ENCODE measurements at regions of chr16 and their contacts with region 1.

Region 1: GRCh38 chr16:81314603-81315270 is at the start of gene GAN:
- DNase-seq: peak; percentile 98 to 99 (median 99)
- ATAC-seq: peak; percentile 97
- H3K4me3 ChIP-seq: peak within 1 kb of the TSS; percentile 80
- H3K27ac ChIP-seq: peak within 1 kb of the TSS; percentile 87
- H3K4me1 ChIP-seq: peaks cover 17 to 28% of the 10 kb centered on the region in 2 experiments
- H3K27me3 ChIP-seq: no peaks in the 10 kb centered on the region
- CTCF ChIP-seq: no peak
- EP300 ChIP-seq: peak; percentile 51
- POLR2A ChIP-seq: peak; percentile 91
- RAD21 ChIP-seq: no peak
- polyA plus RNA-seq, gene GAN: 0.83 to 2.1 TPM

Region 2: DNA sequence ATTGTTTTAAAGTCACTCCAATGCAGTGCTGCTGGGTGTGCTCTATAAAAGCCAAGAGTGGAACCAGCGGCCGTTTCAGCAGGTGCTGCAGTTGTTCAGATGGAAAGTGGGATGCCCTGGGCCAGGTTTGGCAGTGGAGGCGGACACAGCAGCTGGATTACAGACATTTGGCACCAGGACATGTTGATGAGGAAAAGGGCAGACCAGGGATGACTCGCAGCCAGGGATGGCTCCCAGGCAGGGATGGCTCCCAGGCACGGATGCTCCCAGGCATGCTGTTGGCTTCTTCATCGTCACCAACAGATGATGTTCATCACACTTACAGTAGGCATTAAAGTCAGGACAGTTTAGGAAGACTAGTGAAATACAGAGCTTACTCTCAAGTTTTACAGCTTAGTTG is 10.1 kb after region 1 on chr16:
- CTCF ChIA-PET with region 1: no interaction called
- POLR2A ChIA-PET with region 1: interaction called, 11 read pairs
- in situ Hi-C with region 1: no loop called
- intact Hi-C with region 1: no loop called
- DNase-seq: no peak
- ATAC-seq: no peak
- H3K4me3 ChIP-seq: no peak overlapping the region
- H3K27ac ChIP-seq: no peak overlapping the region
- H3K4me1 ChIP-seq: peaks cover 0 to 4% of the 10 kb centered on the region in 2 experiments; a peak in 3 of 5 replicates
- H3K27me3 ChIP-seq: no peaks in the 10 kb centered on the region
- CTCF ChIP-seq: no peak
- EP300 ChIP-seq: no peak
- POLR2A ChIP-seq: no peak
- RAD21 ChIP-seq: no peak

Region 3: GRCh38 chr16:81376880-81377279 is 62.1 kb after region 1 on chr16:
- CTCF ChIA-PET with region 1: no interaction called
- POLR2A ChIA-PET with region 1: no interaction called
- in situ Hi-C with region 1: no loop called
- intact Hi-C with region 1: no loop called
- DNase-seq: no peak
- ATAC-seq: no peak
- H3K4me3 ChIP-seq: no peak overlapping the region
- H3K27ac ChIP-seq: no peak overlapping the region
- H3K4me1 ChIP-seq: no peaks in the 10 kb centered on the region
- H3K27me3 ChIP-seq: no peaks in the 10 kb centered on the region
- CTCF ChIP-seq: no peak
- EP300 ChIP-seq: no peak
- POLR2A ChIP-seq: no peak
- RAD21 ChIP-seq: no peak

Measured in K562 (cell line).